Activated T-helper 2 cell treated with anti-CD3 and anti-CD28 coated beads, Interferon-gamma antibody, Interleukin-2, Interleukin-4, amounts not matched to agents 10 μg/mL and 5 μg/mL and 100 μg/mL, durations not matched to agents 14 hours and 24 hours and 36 hours (primary cell): ENCODE measurements at regions of chr9 and their contacts with region 1.

Region 1: DNA sequence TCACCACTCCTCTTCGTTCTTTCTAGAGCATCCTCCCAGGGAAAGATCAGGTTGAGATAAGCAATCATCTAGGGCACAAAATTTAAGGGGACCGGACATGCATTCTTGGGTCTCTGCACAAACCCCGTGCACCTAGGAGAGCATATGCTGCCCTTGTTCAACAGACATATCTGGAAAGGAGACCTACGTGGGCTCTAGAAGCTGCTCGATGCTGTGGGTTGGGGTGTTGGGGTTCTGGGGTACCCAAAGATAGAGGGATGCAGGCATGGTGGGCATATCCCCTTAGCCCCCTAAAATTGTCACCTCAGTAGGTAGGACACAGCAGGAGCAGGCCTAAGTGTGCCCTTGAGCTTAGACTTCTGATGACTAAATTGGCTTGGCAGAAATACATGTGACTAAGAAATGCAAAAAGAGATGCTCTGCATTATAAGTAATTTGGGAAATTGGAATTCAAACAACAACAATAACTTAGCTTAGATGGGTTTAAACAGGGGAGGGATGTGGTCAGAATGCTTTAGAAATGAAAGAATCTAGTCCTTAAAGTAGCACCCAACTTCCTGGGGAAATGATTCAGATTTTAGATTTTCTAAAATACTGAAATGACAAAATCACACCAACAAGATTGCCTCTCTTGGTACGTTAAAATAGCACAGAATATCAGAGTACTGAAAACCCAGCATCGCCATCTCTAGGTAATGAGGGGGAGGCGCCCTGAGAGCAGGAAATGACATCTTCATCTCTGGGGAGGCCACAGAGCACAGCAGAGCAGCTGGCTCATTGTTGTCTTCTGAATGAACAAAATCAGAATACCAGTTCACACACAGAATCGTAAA is 172.3 kb downstream of the GNA14 start:
- DNase-seq: peak; percentile 63
- H3K4me3 Mint-ChIP-seq: peak overlapping the region; percentile 49
- H3K27ac Mint-ChIP-seq: peak overlapping the region; percentile 97
- H3K4me1 Mint-ChIP-seq: peaks cover 36% of the 10 kb centered on the region
- H3K27me3 Mint-ChIP-seq: no peaks in the 10 kb centered on the region

Region 2: GRCh38 chr9:77000330-77000729 is 475.5 kb before region 1 on chr9:
- intact Hi-C with region 1: no loop called
- DNase-seq: no peak
- H3K4me3 Mint-ChIP-seq: no peak overlapping the region
- H3K27ac Mint-ChIP-seq: no peak overlapping the region
- H3K4me1 Mint-ChIP-seq: no peaks in the 10 kb centered on the region
- H3K27me3 Mint-ChIP-seq: peaks cover 9% of the 10 kb centered on the region

Region 3: GRCh38 chr9:77177161-77177893 is 298.5 kb before region 1 on chr9 and contains the start of gene VPS13A:
- intact Hi-C with region 1: loop called (anchors 5 kb)
- DNase-seq: peak; percentile 93
- H3K4me3 Mint-ChIP-seq: peak within 1 kb of the TSS; percentile 91
- H3K27ac Mint-ChIP-seq: peak within 1 kb of the TSS; percentile 90
- H3K4me1 Mint-ChIP-seq: peaks cover 27% of the 10 kb centered on the region
- H3K27me3 Mint-ChIP-seq: peaks cover 12% of the 10 kb centered on the region
- total RNA-seq, gene VPS13A: 43.8 and 46.9 TPM in 2 replicates

Region 4: DNA sequence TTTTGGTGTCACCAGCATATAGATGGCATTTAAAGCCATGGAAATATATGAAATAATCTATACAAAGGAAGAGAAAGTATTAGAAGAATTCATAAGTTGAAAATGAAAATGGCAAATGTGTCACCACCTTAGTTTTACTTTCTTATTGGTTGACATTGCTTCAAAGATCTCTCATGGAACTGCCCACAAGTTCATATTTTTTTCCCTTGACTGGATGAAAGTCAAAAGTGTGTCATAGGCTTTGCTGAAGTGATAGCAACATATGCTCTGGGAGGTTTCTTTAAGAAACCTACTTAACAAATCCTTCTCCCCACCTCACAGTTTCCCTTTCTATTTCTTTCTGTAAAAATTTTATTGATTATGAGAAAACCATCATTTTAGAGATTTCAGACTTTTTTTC is 171.3 kb before region 1 on chr9:
- intact Hi-C with region 1: loop called (anchors 10 kb)
- DNase-seq: no peak
- H3K4me3 Mint-ChIP-seq: no peak overlapping the region
- H3K27ac Mint-ChIP-seq: peak overlapping the region; percentile 28
- H3K4me1 Mint-ChIP-seq: peaks cover 7% of the 10 kb centered on the region
- H3K27me3 Mint-ChIP-seq: no peaks in the 10 kb centered on the region

Region 5: DNA sequence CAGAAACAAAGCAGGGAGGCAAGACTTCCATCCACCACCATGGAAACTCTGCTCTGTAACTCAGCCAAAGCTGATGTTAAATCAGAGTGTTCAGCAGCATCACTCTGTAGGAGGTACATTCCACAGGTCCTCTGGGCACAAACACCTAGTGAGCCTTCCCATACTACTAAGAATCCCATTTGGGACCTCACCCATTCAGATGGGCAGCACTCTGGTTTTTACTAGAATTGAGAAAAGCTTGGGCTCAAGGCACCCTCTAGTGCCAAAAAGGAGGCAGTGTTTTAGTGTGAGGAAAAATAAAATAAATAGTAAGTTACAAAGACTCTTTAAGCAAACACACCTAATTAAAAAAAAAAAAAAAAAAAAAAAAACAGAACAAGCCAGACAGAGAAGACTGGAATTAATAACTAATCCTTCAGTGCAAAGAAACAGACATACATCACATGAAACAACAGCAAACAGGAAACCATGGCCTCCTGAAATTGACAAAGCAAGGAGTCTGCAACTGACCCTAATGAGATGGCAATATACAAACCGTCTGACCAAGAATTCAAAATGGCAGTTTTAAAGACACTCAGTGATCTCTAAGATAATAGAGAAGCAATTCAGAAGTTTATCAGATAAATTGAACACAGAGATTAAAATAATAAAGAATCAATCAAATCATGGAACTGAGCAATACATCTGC is 12.7 kb after region 1 on chr9:
- intact Hi-C with region 1: loop called (anchors 1 kb)
- DNase-seq: no peak
- H3K4me3 Mint-ChIP-seq: peak overlapping the region; percentile 61
- H3K27ac Mint-ChIP-seq: no peak overlapping the region
- H3K4me1 Mint-ChIP-seq: peaks cover 23% of the 10 kb centered on the region
- H3K27me3 Mint-ChIP-seq: peaks cover 6% of the 10 kb centered on the region

Region 6: GRCh38 chr9:77498891-77499290 is 23.0 kb after region 1 on chr9:
- intact Hi-C with region 1: no loop called
- DNase-seq: no peak
- H3K4me3 Mint-ChIP-seq: no peak overlapping the region
- H3K27ac Mint-ChIP-seq: no peak overlapping the region
- H3K4me1 Mint-ChIP-seq: no peaks in the 10 kb centered on the region
- H3K27me3 Mint-ChIP-seq: peaks cover 8% of the 10 kb centered on the region

Region 7: DNA sequence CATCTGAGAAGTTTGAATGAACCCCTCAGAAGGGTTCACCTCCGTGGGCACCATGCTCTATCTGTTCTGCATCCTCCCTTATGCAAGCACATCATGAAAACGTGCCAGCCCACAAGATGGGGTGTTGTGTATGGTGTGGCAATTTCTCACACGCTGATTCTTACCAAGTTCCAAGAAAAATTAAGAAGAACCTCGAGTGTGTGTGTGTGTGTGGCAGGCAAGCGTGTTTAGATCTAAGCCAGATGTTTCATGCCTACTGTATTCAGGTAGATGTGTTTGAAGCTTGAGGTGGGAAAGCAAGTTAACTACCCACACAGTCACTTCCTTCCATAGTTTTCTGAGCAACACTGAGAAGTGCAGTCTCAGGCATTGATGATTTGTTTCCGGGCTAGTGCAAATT is 250.0 kb after region 1 on chr9:
- intact Hi-C with region 1: no loop called
- DNase-seq: no peak
- H3K4me3 Mint-ChIP-seq: peak overlapping the region; percentile 5
- H3K27ac Mint-ChIP-seq: peak overlapping the region; percentile 71
- H3K4me1 Mint-ChIP-seq: peaks cover 33% of the 10 kb centered on the region
- H3K27me3 Mint-ChIP-seq: no peaks in the 10 kb centered on the region

Region 8: GRCh38 chr9:77744841-77745430 is 269.1 kb after region 1 on chr9:
- intact Hi-C with region 1: loop called (anchors 5 kb)
- DNase-seq: no peak
- H3K4me3 Mint-ChIP-seq: peak overlapping the region; percentile 35
- H3K27ac Mint-ChIP-seq: peak overlapping the region; percentile 68
- H3K4me1 Mint-ChIP-seq: peaks cover 41% of the 10 kb centered on the region
- H3K27me3 Mint-ChIP-seq: no peaks in the 10 kb centered on the region

Region 9: GRCh38 chr9:77802515-77803293 is 326.8 kb after region 1 on chr9:
- intact Hi-C with region 1: loop called (anchors 1 kb)
- DNase-seq: no peak
- H3K4me3 Mint-ChIP-seq: no peak overlapping the region
- H3K27ac Mint-ChIP-seq: no peak overlapping the region
- H3K4me1 Mint-ChIP-seq: peaks cover 34% of the 10 kb centered on the region
- H3K27me3 Mint-ChIP-seq: no peaks in the 10 kb centered on the region